A549 (cell line): ENCODE measurements at regions of chr5 and their contacts with region 1.

Region 1: DNA sequence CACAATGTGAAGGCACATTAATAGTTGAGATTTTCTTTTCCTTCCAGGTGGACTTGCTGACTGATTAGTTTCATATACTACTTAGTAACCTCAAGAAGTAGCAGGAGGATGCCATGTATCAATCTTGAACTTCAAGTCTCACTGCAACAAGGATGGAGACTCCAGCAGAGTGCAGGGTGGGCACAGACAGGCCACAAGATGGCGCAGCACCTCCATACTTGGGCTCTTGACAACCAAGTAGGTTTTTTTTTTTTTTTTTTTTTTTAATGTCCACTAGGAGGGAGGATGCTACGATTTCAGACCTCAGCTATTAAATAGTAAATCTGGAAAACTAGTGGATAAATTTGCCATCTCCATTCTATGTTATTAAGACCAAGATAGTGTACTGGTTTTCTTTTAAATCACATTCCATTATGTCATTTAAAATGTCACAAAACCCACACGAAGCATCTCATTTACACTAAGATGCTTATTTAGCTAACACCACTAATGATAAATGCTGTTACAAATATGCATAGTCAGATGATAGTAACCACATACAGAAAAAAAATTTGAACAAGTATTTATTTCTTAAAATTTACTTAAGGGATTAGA is 58.6 kb downstream of the IL6ST start:
- DNase-seq: peak; percentile 68 to 91
- ATAC-seq: peak; percentile 58 to 83
- H3K4me3 ChIP-seq: no peak overlapping the region
- H3K27ac ChIP-seq: peak overlapping the region; percentile 87 to 93
- H3K4me1 ChIP-seq: peaks cover 64% of the 10 kb centered on the region
- CTCF ChIP-seq: peak; percentile 99
- EP300 ChIP-seq: no peak
- POLR2A ChIP-seq: no peak
- RAD21 ChIP-seq: peak; percentile 96 to 98

Region 2: DNA sequence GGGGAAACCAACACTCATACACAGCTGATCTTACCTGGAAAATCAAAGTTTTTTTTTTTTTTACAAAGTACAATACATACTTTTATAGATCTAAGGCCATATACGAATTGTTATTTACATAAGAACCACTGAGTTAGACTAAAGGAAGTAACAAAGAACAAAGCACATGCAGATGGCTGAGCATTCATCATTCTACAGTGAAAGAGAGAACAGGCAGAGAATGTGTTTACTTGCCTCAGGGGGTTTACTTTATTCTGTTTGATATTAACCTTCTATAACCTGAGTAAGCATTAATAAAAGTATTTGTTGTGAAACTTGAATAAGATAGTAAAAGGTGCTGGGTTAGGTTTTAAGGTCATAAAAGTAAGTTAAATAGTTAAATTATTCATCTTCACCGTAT is 278.8 kb before region 1 on chr5:
- CTCF ChIA-PET with region 1: no interaction called
- POLR2A ChIA-PET with region 1: no interaction called
- DNase-seq: peak in 1 of 2 experiments; percentile 67
- ATAC-seq: peak; percentile 54 to 70; a peak in 4 of 6 replicates
- H3K4me3 ChIP-seq: no peak overlapping the region
- H3K27ac ChIP-seq: peak overlapping the region in 1 of 2 experiments; percentile 54; a peak in 2 of 6 replicates
- H3K4me1 ChIP-seq: peaks cover 26% of the 10 kb centered on the region
- CTCF ChIP-seq: no peak
- EP300 ChIP-seq: peak; percentile 15 to 25; a peak in 1 of 5 replicates
- POLR2A ChIP-seq: no peak
- RAD21 ChIP-seq: no peak

Region 3: DNA sequence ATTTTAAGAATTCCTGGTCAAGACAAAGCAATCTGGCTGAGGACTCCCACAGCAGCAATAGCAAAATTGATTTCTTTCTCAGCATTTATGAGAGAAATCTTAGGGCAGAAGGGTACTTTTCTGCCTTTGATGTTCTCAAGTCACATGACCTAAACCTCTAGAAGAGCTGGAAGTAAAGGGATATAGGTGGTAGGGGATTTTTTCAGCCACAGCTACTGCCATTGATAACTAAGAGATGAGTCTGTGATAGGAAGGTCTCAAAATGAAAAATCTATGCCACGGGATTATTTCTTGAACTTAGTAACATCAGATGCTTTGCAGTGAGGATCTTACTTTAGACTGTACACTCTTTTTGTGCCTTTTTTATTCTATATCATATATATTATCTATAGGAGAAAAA is 23.0 kb after region 1 on chr5:
- CTCF ChIA-PET with region 1: interaction called, 22 read pairs
- POLR2A ChIA-PET with region 1: no interaction called
- DNase-seq: no peak
- ATAC-seq: no peak
- H3K4me3 ChIP-seq: no peak overlapping the region
- H3K27ac ChIP-seq: no peak overlapping the region
- H3K4me1 ChIP-seq: no peaks in the 10 kb centered on the region; the same call in 2 of the 3 replicates
- CTCF ChIP-seq: no peak
- EP300 ChIP-seq: no peak
- POLR2A ChIP-seq: no peak
- RAD21 ChIP-seq: no peak

Region 4: GRCh38 chr5:55994574-55995333 is 58.6 kb after region 1 on chr5 and contains the start of gene IL6ST:
- CTCF ChIA-PET with region 1: interaction called, 12 read pairs
- POLR2A ChIA-PET with region 1: no interaction called
- DNase-seq: peak; percentile 96 to 97
- ATAC-seq: peak; percentile 95
- H3K4me3 ChIP-seq: peak within 1 kb of the TSS; percentile 80
- H3K27ac ChIP-seq: peak within 1 kb of the TSS; percentile 93 to 94
- H3K4me1 ChIP-seq: peaks cover 45% of the 10 kb centered on the region
- CTCF ChIP-seq: no peak
- EP300 ChIP-seq: no peak
- POLR2A ChIP-seq: peak; percentile 50
- RAD21 ChIP-seq: peak in 1 of 2 experiments; percentile 11; a peak in 2 of 5 replicates
- polyA plus RNA-seq, gene IL6ST: 183 and 198 TPM in 2 replicates

Region 5: GRCh38 chr5:56175488-56175887 is 239.3 kb after region 1 on chr5:
- CTCF ChIA-PET with region 1: interaction called, 12 read pairs
- POLR2A ChIA-PET with region 1: no interaction called
- DNase-seq: peak in 1 of 2 experiments; percentile 22
- ATAC-seq: peak; percentile 62 to 68; a peak in 5 of 6 replicates
- H3K4me3 ChIP-seq: no peak overlapping the region
- H3K27ac ChIP-seq: peak overlapping the region in 1 of 2 experiments; percentile 62; a peak in 4 of 6 replicates
- H3K4me1 ChIP-seq: peaks cover 19% of the 10 kb centered on the region
- CTCF ChIP-seq: no peak
- EP300 ChIP-seq: no peak
- POLR2A ChIP-seq: no peak
- RAD21 ChIP-seq: no peak

Region 6: GRCh38 chr5:56259002-56259511 is 322.9 kb after region 1 on chr5:
- CTCF ChIA-PET with region 1: interaction called, 108 read pairs
- POLR2A ChIA-PET with region 1: no interaction called
- DNase-seq: peak in 1 of 2 experiments; percentile 37
- ATAC-seq: peak; percentile 77 to 91
- H3K4me3 ChIP-seq: no peak overlapping the region
- H3K27ac ChIP-seq: peak overlapping the region; percentile 59 to 75
- H3K4me1 ChIP-seq: peaks cover 14% of the 10 kb centered on the region
- CTCF ChIP-seq: no peak
- EP300 ChIP-seq: no peak
- POLR2A ChIP-seq: no peak
- RAD21 ChIP-seq: peak; percentile 4 to 35; a peak in 2 of 5 replicates

Region 7: DNA sequence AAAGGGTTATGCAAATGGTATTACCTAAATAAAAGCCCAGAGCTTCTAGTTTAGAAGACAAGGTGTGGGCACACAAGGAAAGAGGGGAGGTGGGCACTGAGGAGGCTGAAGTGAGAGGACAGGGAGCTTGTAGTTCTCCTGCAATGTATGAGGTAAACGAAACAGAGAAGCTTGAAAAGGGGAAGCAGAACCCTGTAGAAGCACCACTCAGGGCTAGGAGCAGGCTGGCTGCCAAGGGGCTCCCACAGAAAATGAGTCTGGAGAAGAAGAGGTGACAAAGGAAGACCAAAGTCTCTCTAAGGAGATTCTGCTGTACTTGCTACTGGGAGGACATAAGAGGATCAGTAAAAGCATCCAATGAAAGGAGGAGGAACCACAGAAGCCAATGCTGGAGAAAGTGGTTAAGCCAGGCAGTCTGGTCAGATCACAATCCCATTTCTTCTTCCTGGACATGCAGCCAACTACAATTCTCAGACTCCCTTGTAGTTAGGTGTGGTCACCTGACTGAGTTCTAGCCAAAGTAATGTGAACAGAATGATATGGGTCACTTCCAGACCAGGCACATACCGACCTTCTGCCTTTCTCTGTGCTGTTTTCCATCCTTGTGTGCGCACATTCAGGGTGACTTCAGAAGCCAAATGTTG is 704.7 kb after region 1 on chr5:
- CTCF ChIA-PET with region 1: no interaction called
- POLR2A ChIA-PET with region 1: no interaction called
- DNase-seq: no peak
- ATAC-seq: no peak
- H3K4me3 ChIP-seq: no peak overlapping the region
- H3K27ac ChIP-seq: peak overlapping the region in 1 of 2 experiments; percentile 47; a peak in 2 of 6 replicates
- H3K4me1 ChIP-seq: peaks cover 39% of the 10 kb centered on the region
- CTCF ChIP-seq: no peak
- EP300 ChIP-seq: no peak
- POLR2A ChIP-seq: no peak
- RAD21 ChIP-seq: no peak

Region 8: GRCh38 chr5:56838409-56839039 is 902.3 kb after region 1 on chr5:
- CTCF ChIA-PET with region 1: interaction called, 26 read pairs
- POLR2A ChIA-PET with region 1: no interaction called
- DNase-seq: peak; percentile 25 to 60
- ATAC-seq: peak; percentile 73 to 79
- H3K4me3 ChIP-seq: no peak overlapping the region; the same call in 2 of the 3 replicates
- H3K27ac ChIP-seq: peak overlapping the region; percentile 64 to 79
- H3K4me1 ChIP-seq: peaks cover 21% of the 10 kb centered on the region; the same call in 2 of the 3 replicates
- CTCF ChIP-seq: peak; percentile 92
- EP300 ChIP-seq: no peak
- POLR2A ChIP-seq: no peak
- RAD21 ChIP-seq: peak; percentile 89 to 93